Dorsolateral prefrontal cortex (tissue), 120 donors: ENCODE measurements at regions of chr4 and their contacts with region 1.

Region 1: GRCh38 chr4:10296730-10297129 is 160.5 kb downstream of the ZNF518B start:
- DNase-seq: peak; percentile 8 to 84 (median 51)
- H3K4me3 ChIP-seq: peak overlapping the region in 8 of 59 donors; percentile 1 to 31 (median 14)
- H3K27ac ChIP-seq: peak overlapping the region in 57 of 59 donors; percentile 5 to 96 (median 72)
- H3K27me3 ChIP-seq: no peaks in the 10 kb centered on the region
- CTCF ChIP-seq: peak in 2 of 56 donors; percentile 14 to 35

Region 2: GRCh38 chr4:10033191-10033881 is 263.4 kb before region 1 on chr4:
- intact Hi-C with region 1: no loop called
- DNase-seq: peak in 1 of 10 donors; percentile 63
- H3K4me3 ChIP-seq: no peak overlapping the region
- H3K27ac ChIP-seq: peak overlapping the region in 5 of 59 donors; percentile 5 to 47 (median 26)
- H3K27me3 ChIP-seq: no peaks in the 10 kb centered on the region
- CTCF ChIP-seq: no peak

Region 3: DNA sequence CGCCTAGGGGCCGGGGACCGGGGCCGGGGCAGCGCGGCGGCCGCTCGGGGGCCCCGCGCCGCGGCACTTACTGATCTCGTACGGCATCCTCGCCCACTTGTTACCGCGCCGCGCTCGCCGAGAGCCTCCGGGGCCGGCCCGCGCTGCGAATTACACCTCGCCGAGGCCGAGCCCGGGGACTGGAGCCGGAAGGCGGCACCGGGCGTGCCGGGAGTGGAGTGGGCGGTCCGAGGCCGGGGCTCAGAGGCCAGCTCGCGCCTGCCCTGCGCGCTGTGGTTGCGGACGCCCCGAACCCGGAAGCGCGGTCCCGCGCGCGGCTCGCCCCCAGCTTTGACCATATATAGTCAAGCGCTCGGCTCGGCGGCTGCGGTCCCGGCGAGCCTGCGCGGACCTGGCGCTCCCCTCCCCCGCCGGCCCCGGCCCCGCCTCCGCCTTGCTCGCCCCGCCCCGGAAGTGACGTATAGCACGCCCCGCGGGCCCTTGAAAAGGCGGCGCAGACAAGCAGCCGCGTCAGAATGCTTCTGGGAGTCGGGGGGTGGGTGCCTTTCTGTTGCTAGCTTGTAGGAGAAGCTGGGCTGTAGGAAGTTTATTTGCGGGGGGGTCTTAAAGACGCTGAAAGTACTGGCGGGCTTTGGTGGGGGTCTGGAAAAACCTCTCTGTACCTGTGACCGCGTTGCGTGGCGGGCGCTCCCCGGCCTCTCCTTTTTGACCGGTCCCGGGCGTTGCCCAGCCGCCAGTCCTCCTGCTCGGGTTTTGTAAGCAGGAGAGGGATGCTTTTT is 180.0 kb before region 1 on chr4 and contains the start of gene WDR1:
- intact Hi-C with region 1: loop called in 1 of 2 experiments (anchors 5 kb)
- DNase-seq: peak; percentile 88 to 95 (median 93)
- H3K4me3 ChIP-seq: peak within 1 kb of the TSS; percentile 60 to 89 (median 78)
- H3K27ac ChIP-seq: peak within 1 kb of the TSS; percentile 72 to 99 (median 92)
- H3K27me3 ChIP-seq: no peaks in the 10 kb centered on the region
- CTCF ChIP-seq: peak in 15 of 56 donors; percentile 3 to 48 (median 18)
- total RNA-seq, gene WDR1: 67.7 to 164 (median 107) TPM

Region 4: GRCh38 chr4:10164877-10165283 is 131.8 kb before region 1 on chr4:
- intact Hi-C with region 1: loop called in 1 of 2 experiments (anchors 5 kb)
- DNase-seq: peak in 8 of 10 donors; percentile 21 to 65 (median 48)
- H3K4me3 ChIP-seq: no peak overlapping the region
- H3K27ac ChIP-seq: no peak overlapping the region
- H3K27me3 ChIP-seq: no peaks in the 10 kb centered on the region
- CTCF ChIP-seq: peak; percentile 55 to 82 (median 73)

Region 5: GRCh38 chr4:10186228-10187214 is 110.2 kb before region 1 on chr4:
- intact Hi-C with region 1: loop called in 1 of 2 experiments (anchors 5 kb)
- DNase-seq: peak in 1 of 10 donors; percentile 28
- H3K4me3 ChIP-seq: no peak overlapping the region
- H3K27ac ChIP-seq: no peak overlapping the region
- H3K27me3 ChIP-seq: peaks cover 0 to 10% (median 0%) of the 10 kb centered on the region in 45 donors
- CTCF ChIP-seq: peak in 40 of 56 donors; percentile 8 to 62 (median 34)

Region 6: GRCh38 chr4:10403633-10404445 is 107.1 kb after region 1 on chr4:
- intact Hi-C with region 1: loop called in 1 of 2 experiments (anchors 5 kb)
- DNase-seq: peak in 1 of 10 donors; percentile 14
- H3K4me3 ChIP-seq: no peak overlapping the region
- H3K27ac ChIP-seq: no peak overlapping the region
- H3K27me3 ChIP-seq: peaks cover 0 to 3% (median 0%) of the 10 kb centered on the region in 45 donors
- CTCF ChIP-seq: peak; percentile 44 to 91 (median 70)